ENCODE measurements at regions of chr4 and their contacts with region 1.

Region 1: DNA sequence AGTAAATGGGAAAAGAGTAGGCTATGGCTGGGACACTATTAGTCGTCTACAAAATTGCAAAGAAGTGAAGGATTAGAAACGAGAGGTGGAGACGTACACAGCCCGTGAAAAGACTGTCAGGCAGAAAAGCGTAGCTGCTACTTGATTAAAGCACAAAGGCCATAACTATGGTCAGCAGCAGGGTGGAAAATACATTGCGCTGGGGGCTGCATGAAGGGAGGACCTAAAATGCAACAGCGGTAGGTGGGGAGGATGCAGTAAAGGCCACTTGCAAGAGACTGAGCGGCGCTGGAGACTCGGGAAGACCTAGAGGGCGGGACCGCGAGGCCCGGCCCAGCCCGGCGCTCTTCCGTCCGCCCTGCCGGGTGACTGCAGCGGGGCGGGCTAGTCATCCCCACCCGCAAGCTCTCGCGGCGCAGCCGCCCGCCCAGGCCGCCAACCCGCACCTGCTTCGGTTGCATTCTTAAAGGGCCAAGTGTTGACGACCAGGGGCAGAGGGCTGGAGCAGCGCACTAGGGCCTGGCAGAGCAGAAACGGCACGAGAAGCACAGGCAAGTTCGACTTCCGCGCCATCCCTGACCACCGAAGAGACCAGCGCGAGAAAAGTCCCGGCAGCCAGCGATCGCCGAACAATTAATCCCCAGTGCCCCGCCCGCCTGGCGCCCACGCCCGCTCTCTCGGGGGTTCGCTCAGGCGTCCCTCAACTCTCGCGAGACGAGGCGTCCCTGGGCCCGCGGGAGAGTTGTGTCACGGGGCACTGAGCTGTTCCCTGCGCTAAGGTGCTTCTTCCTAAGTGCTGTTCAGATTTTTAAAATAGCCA is at the start of gene AGA:
- DNase-seq: peak; percentile 96
- ATAC-seq: peak; percentile 94
- H3K4me3 Mint-ChIP-seq: peak within 1 kb of the TSS; percentile 97
- H3K27ac Mint-ChIP-seq: peak within 1 kb of the TSS; percentile 98
- H3K4me1 Mint-ChIP-seq: peaks cover 19% of the 10 kb centered on the region
- H3K27me3 Mint-ChIP-seq: no peaks in the 10 kb centered on the region
- total RNA-seq, gene AGA: 18.6 to 21.5 TPM

Region 2: GRCh38 chr4:177309522-177310371 is 132.3 kb before region 1 on chr4 and contains the start of gene NEIL3:
- POLR2A ChIA-PET with region 1: interaction called, 53 read pairs
- DNase-seq: peak; percentile 93
- ATAC-seq: peak; percentile 89
- H3K4me3 Mint-ChIP-seq: peak within 1 kb of the TSS; percentile 96
- H3K27ac Mint-ChIP-seq: peak within 1 kb of the TSS; percentile 99
- H3K4me1 Mint-ChIP-seq: peaks cover 35% of the 10 kb centered on the region
- H3K27me3 Mint-ChIP-seq: no peaks in the 10 kb centered on the region
- total RNA-seq, gene NEIL3: 23.2 to 24.0 TPM

Region 3: DNA sequence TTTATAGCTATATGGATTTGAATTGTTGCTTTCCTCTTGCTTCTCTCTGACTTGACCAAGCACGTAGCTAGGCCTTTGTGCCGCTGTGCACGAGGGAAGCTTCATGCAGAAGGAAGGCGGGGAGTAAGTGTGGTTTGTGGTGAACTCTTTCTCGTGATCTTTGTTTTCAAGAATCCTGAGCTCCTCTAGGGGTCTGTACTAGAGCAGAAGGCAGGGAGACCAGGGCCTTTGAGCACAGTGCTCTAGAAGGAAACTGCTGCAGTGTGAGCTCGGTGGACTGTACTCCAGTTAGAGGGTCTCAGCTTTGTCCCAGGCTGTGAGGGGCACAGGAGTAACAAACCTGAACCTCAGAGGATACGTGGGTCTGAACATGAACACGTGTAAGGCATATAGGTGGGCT is 48.8 kb before region 1 on chr4:
- POLR2A ChIA-PET with region 1: interaction called, 41 read pairs
- DNase-seq: peak; percentile 51
- ATAC-seq: peak; percentile 98
- H3K4me3 Mint-ChIP-seq: peak overlapping the region; percentile 70
- H3K27ac Mint-ChIP-seq: peak overlapping the region; percentile 86
- H3K4me1 Mint-ChIP-seq: peaks cover 36% of the 10 kb centered on the region
- H3K27me3 Mint-ChIP-seq: no peaks in the 10 kb centered on the region

Region 4: DNA sequence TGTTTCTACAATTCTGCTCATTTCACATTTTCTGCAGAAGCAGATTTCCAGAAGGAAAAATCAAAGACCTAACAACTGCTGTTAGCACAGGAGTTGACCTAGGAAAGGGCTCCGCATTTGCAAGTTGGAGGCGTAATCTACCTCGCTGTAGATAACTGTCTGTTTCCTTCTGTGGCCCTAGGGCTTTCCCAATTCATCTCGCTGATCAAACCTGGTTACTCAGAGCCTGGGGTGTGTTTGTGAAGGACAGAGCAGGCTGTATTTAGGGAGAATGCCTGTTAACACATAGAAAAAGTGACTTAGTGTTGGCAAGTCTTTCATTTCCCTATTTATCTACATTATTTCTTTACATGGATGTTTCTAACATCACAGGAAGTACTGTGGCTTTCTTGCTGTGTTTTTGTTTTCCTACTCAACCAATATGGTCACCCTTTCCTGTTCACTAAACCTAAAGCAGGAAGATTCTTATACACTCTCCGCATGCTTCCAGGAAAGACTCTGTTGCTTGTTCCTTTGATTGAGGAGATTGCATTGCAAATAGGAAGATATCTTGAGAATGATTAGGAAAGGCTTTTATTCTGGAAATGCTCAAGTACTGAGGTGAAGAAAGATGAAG is 40.2 kb before region 1 on chr4:
- POLR2A ChIA-PET with region 1: interaction called, 23 read pairs
- DNase-seq: no peak
- ATAC-seq: peak; percentile 82
- H3K4me3 Mint-ChIP-seq: peak overlapping the region; percentile 58
- H3K27ac Mint-ChIP-seq: peak overlapping the region; percentile 82
- H3K4me1 Mint-ChIP-seq: peaks cover 40% of the 10 kb centered on the region
- H3K27me3 Mint-ChIP-seq: no peaks in the 10 kb centered on the region

Region 5: DNA sequence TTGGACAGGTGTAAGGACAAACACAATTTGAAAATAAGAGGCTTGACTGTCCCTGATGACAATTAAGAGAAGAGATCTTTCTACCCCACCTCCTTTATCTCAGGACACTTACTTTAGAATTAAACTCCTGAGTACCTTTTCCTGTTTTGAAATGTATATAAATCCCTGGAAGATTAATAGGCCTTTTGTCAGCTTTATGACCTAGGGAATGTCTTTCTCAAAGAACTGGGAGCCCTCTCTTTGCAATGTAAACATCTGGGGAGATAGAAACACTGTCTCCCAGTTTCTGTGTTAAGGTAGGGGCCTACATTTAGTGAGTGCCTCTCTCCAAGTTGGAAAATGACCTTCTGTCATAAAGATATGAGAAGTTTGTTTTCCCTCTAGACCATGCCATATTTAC is 31.4 kb before region 1 on chr4:
- POLR2A ChIA-PET with region 1: interaction called, 10 read pairs
- DNase-seq: no peak
- ATAC-seq: no peak
- H3K4me3 Mint-ChIP-seq: no peak overlapping the region
- H3K27ac Mint-ChIP-seq: no peak overlapping the region
- H3K4me1 Mint-ChIP-seq: peaks cover 4% of the 10 kb centered on the region
- H3K27me3 Mint-ChIP-seq: peaks cover 3% of the 10 kb centered on the region

Region 6: GRCh38 chr4:178027796-178028195 is 585.8 kb after region 1 on chr4:
- POLR2A ChIA-PET with region 1: no interaction called
- DNase-seq: no peak
- ATAC-seq: no peak
- H3K4me3 Mint-ChIP-seq: no peak overlapping the region
- H3K27ac Mint-ChIP-seq: no peak overlapping the region
- H3K4me1 Mint-ChIP-seq: no peaks in the 10 kb centered on the region
- H3K27me3 Mint-ChIP-seq: no peaks in the 10 kb centered on the region

Measured in activated naive CD8-positive, alpha-beta T cell treated with anti-CD3 and anti-CD28 coated beads, Interleukin-2, amount 10 ng/mL, durations not matched to agents 7 days and 5 days (primary cell).